K562 (cell line): ENCODE measurements at regions of chr1 and their contacts with region 1.

Region 1: DNA sequence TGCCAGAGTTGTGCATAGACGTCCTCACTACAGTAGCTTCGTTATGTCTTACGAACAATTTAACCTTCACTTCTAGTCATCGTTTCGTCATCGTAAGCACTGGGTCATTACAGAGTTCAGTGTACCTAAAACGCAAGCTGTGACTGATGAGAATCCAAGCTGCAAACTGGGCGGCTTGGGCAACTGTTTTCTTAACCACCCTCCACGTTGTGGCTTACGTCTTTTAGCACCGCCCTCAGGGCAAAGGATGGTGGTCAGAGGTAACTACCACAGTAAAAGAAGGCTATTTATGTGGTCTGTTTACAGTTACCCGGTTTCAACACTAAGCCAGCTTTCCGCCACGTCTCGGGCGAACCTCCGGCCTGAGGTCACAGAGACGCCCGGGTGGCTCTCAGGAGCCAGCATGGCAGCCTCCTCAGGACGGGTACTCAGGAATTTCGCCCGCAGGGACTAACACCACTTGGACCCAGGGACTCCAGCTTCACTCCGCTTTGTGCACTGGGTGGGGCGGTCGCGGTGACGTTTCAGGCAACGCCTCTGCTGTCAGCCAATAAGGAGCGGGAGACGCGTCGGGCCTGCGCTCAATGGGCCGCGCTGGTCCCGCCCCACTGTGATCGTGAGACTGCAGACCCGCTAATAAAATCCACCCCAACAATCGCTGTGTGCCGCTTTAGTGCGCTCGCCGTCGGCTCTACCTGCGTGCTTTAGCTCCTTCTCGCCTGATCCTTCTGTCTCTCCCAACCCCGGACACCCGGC is at the start of gene CTH:
- DNase-seq: peak; percentile 93 to 98 (median 94)
- ATAC-seq: peak; percentile 96
- H3K4me3 ChIP-seq: peak within 1 kb of the TSS; percentile 97
- H3K27ac ChIP-seq: peak within 1 kb of the TSS; percentile 97
- H3K4me1 ChIP-seq: no peaks in the 10 kb centered on the region; a peak in 2 of 5 replicates
- H3K27me3 ChIP-seq: no peaks in the 10 kb centered on the region
- CTCF ChIP-seq: no peak
- EP300 ChIP-seq: no peak
- POLR2A ChIP-seq: peak; percentile 98
- RAD21 ChIP-seq: no peak; a peak in 1 of 4 replicates
- polyA plus RNA-seq, gene CTH: 45.6 to 54.4 TPM

Region 2: DNA sequence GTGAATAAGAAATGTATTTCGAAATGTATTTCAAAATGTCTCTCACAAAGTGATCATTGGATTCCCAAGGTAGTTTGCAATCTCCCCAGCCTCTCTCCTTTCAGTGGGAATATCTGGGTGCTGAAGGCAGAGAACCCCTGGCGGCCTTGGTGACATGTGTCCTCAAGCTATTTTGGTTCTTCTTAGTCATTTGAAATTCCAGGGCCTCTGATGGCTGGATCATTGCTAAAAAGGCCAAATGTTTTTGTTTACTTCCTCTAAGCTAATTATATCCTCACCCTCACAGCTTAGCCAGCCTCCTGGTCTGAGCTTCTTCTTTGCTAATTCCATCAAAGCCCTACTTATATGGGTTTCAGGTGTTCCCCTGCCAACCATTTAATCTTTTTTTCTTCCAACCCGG is 276.6 kb before region 1 on chr1:
- CTCF ChIA-PET with region 1: no interaction called
- POLR2A ChIA-PET with region 1: no interaction called
- in situ Hi-C with region 1: no loop called
- intact Hi-C with region 1: loop called (anchors 5 kb)
- DNase-seq: no peak
- ATAC-seq: no peak
- H3K4me3 ChIP-seq: no peak overlapping the region
- H3K27ac ChIP-seq: no peak overlapping the region
- H3K4me1 ChIP-seq: no peaks in the 10 kb centered on the region
- H3K27me3 ChIP-seq: no peaks in the 10 kb centered on the region
- CTCF ChIP-seq: no peak
- EP300 ChIP-seq: no peak
- POLR2A ChIP-seq: no peak
- RAD21 ChIP-seq: no peak

Region 3: GRCh38 chr1:70205434-70206118 is 205.2 kb before region 1 on chr1 and contains the start of gene LRRC40:
- CTCF ChIA-PET with region 1: no interaction called
- POLR2A ChIA-PET with region 1: interaction called, 7 read pairs
- in situ Hi-C with region 1: no loop called
- intact Hi-C with region 1: loop called (anchors 5 kb)
- DNase-seq: peak; percentile 90 to 98 (median 92)
- ATAC-seq: peak; percentile 80
- H3K4me3 ChIP-seq: peak within 1 kb of the TSS; percentile 71
- H3K27ac ChIP-seq: peak within 1 kb of the TSS; percentile 96
- H3K4me1 ChIP-seq: peaks cover 0 to 3% of the 10 kb centered on the region in 2 experiments; a peak in 3 of 5 replicates
- H3K27me3 ChIP-seq: no peaks in the 10 kb centered on the region
- CTCF ChIP-seq: 0 out of 6 replicates have a peak, but pooled peaks of 2 of the 3 experiments have one; percentile 1 to 27
- EP300 ChIP-seq: peak; percentile 60
- POLR2A ChIP-seq: peak; percentile 92
- RAD21 ChIP-seq: no peak
- polyA plus RNA-seq, gene LRRC40: 32.2 to 36.2 TPM

Region 4: DNA sequence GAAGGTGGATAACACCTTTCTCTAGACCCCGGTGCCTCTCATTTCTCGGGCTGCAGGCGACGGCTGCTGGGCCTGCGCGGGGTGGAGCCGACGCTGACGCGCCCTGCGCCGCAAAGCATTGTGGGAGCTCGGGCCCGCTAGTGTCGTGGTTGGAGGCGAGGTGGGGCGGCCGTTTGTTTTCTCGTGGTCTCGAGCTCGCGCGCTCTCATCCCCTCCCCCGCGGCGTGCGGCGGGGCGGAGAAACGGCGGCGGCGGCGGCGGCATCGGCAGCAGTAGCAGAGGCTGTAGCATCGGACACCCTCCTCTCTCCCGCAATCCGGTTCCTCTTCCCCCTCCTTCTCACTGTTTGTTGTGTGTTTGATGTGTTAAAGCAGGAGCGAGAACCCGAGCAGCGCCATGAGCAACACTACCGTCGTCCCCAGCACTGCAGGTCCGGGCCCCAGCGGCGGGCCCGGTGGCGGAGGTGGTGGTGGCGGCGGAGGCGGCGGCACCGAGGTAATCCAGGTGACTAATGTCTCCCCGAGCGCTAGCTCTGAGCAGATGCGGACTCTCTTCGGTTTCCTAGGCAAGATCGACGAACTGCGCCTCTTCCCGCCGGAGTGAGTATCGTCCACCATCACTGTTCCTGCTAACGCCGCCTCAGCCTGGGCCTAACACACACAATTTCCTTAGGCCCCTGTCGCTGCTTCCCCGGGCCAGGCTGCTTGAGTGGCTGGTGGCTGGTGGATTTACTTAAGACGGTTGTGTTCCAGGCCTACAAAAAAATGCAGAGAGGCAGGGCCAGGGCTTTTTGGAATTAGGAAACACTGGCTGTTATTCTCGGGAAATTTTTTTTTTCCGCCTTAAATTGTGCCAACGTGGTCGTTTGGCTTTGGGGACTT is 189.3 kb before region 1 on chr1 and contains the start of gene SRSF11:
- CTCF ChIA-PET with region 1: no interaction called
- POLR2A ChIA-PET with region 1: interaction called, 4 read pairs
- in situ Hi-C with region 1: no loop called
- intact Hi-C with region 1: loop called (anchors 5 kb)
- DNase-seq: peak; percentile 88 to 97 (median 89)
- ATAC-seq: peak; percentile 92
- H3K4me3 ChIP-seq: peak within 1 kb of the TSS; percentile 61
- H3K27ac ChIP-seq: peak within 1 kb of the TSS; percentile 94
- H3K4me1 ChIP-seq: peaks cover 9 to 24% of the 10 kb centered on the region in 2 experiments; a peak in 4 of 5 replicates
- H3K27me3 ChIP-seq: no peaks in the 10 kb centered on the region
- CTCF ChIP-seq: peak; percentile 3 to 26 (median 10); a peak in 2 of 6 replicates
- EP300 ChIP-seq: no peak
- POLR2A ChIP-seq: peak; percentile 91
- RAD21 ChIP-seq: no peak
- polyA plus RNA-seq, gene SRSF11: 76.9 to 79.2 TPM

Region 5: DNA sequence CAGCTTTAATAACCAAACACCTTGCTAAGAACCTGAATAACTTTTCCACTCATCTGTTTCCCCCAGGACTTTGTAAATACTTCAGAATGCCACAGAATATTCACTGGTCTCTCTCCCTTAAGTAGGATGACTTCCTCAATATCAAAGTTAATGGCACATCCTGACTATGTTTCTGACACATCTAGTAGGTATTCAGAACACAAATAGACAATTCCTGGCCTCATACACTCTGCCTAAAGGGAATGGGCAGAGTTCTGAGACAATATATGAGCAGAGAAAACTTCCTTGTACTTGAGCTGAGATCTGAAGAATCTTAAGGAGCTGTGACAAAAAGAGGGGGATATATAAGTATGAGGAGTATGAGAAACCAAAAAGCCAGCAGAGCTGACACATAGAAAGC is 91.0 kb before region 1 on chr1:
- CTCF ChIA-PET with region 1: interaction called, 4 read pairs
- POLR2A ChIA-PET with region 1: interaction called, 4 read pairs
- in situ Hi-C with region 1: no loop called
- intact Hi-C with region 1: loop called (anchors 5 kb)
- DNase-seq: no peak
- ATAC-seq: no peak
- H3K4me3 ChIP-seq: no peak overlapping the region
- H3K27ac ChIP-seq: no peak overlapping the region
- H3K4me1 ChIP-seq: no peaks in the 10 kb centered on the region
- H3K27me3 ChIP-seq: no peaks in the 10 kb centered on the region
- CTCF ChIP-seq: no peak
- EP300 ChIP-seq: no peak
- POLR2A ChIP-seq: no peak
- RAD21 ChIP-seq: no peak

Region 6: GRCh38 chr1:70354332-70355110 is 56.3 kb before region 1 on chr1 and contains the start of gene ANKRD13C:
- CTCF ChIA-PET with region 1: no interaction called
- POLR2A ChIA-PET with region 1: interaction called, 44 read pairs
- in situ Hi-C with region 1: no loop called
- intact Hi-C with region 1: loop called (anchors 1 kb)
- DNase-seq: peak; percentile 91 to 97 (median 92)
- ATAC-seq: peak; percentile 94
- H3K4me3 ChIP-seq: peak within 1 kb of the TSS; percentile 95
- H3K27ac ChIP-seq: peak within 1 kb of the TSS; percentile 96
- H3K4me1 ChIP-seq: peaks cover 5 to 22% of the 10 kb centered on the region in 2 experiments; a peak in 3 of 5 replicates
- H3K27me3 ChIP-seq: no peaks in the 10 kb centered on the region
- CTCF ChIP-seq: no peak
- EP300 ChIP-seq: no peak
- POLR2A ChIP-seq: peak; percentile 97
- RAD21 ChIP-seq: 0 out of 4 replicates have a peak, but pooled peaks of 1 of the 2 experiments have one; percentile 21
- polyA plus RNA-seq, gene ANKRD13C: 3.4 to 4.0 TPM

Region 7: GRCh38 chr1:70387507-70387906 is 23.3 kb before region 1 on chr1:
- CTCF ChIA-PET with region 1: no interaction called
- POLR2A ChIA-PET with region 1: interaction called, 13 read pairs
- in situ Hi-C with region 1: no loop called
- intact Hi-C with region 1: no loop called
- DNase-seq: no peak
- ATAC-seq: peak; percentile 45; the same call in 2 of the 3 replicates
- H3K4me3 ChIP-seq: no peak overlapping the region
- H3K27ac ChIP-seq: no peak overlapping the region
- H3K4me1 ChIP-seq: no peaks in the 10 kb centered on the region
- H3K27me3 ChIP-seq: no peaks in the 10 kb centered on the region
- CTCF ChIP-seq: no peak
- EP300 ChIP-seq: no peak
- POLR2A ChIP-seq: no peak
- RAD21 ChIP-seq: no peak

Region 8: GRCh38 chr1:70465911-70466310 is 55.1 kb after region 1 on chr1:
- CTCF ChIA-PET with region 1: no interaction called
- POLR2A ChIA-PET with region 1: no interaction called
- in situ Hi-C with region 1: no loop called
- intact Hi-C with region 1: no loop called
- DNase-seq: no peak
- ATAC-seq: no peak
- H3K4me3 ChIP-seq: no peak overlapping the region
- H3K27ac ChIP-seq: no peak overlapping the region
- H3K4me1 ChIP-seq: peaks cover 6 to 9% of the 10 kb centered on the region in 2 experiments
- H3K27me3 ChIP-seq: peaks cover 0 to 9% of the 10 kb centered on the region in 2 experiments; a peak in 2 of 5 replicates
- CTCF ChIP-seq: no peak
- EP300 ChIP-seq: no peak
- POLR2A ChIP-seq: no peak
- RAD21 ChIP-seq: no peak